ENCODE measurements at regions of chr7 and their contacts with region 1.

Region 1: GRCh38 chr7:93245525-93246432 is 13.6 kb downstream of the VPS50 start:
- DNase-seq: no peak
- ATAC-seq: no peak
- H3K4me3 ChIP-seq: no peak overlapping the region
- H3K27ac ChIP-seq: no peak overlapping the region
- H3K4me1 ChIP-seq: peaks cover 0 to 9% (median 0%) of the 10 kb centered on the region in 12 donors
- H3K27me3 ChIP-seq: no peaks in the 10 kb centered on the region
- CTCF ChIP-seq: peak; percentile 50 to 75 (median 64)
- POLR2A ChIP-seq: no peak

Region 2: DNA sequence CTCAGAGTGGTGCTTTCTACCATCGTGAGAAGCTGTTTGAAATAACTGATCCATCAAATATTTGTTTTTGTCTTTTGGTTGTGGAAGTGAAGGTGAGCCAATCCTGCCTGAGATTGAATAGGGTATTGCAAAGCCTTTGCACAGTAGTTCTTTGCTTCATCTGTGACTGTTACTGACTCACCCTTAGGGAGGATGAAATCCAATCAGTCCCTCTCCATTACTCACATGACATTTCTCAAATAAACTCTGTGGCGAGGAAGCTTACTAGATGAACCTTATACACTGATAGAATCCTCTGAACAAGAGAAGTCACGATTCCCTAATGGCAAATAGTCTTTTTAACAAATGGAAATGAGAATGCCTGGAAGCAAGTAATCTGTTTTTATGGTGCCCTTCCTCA is 51.4 kb before region 1 on chr7:
- intact Hi-C with region 1: no loop called
- DNase-seq: no peak
- ATAC-seq: no peak
- H3K4me3 ChIP-seq: no peak overlapping the region
- H3K27ac ChIP-seq: no peak overlapping the region
- H3K4me1 ChIP-seq: no peaks in the 10 kb centered on the region
- H3K27me3 ChIP-seq: peaks cover 0 to 8% (median 0%) of the 10 kb centered on the region in 9 donors
- CTCF ChIP-seq: no peak
- POLR2A ChIP-seq: no peak

Region 3: DNA sequence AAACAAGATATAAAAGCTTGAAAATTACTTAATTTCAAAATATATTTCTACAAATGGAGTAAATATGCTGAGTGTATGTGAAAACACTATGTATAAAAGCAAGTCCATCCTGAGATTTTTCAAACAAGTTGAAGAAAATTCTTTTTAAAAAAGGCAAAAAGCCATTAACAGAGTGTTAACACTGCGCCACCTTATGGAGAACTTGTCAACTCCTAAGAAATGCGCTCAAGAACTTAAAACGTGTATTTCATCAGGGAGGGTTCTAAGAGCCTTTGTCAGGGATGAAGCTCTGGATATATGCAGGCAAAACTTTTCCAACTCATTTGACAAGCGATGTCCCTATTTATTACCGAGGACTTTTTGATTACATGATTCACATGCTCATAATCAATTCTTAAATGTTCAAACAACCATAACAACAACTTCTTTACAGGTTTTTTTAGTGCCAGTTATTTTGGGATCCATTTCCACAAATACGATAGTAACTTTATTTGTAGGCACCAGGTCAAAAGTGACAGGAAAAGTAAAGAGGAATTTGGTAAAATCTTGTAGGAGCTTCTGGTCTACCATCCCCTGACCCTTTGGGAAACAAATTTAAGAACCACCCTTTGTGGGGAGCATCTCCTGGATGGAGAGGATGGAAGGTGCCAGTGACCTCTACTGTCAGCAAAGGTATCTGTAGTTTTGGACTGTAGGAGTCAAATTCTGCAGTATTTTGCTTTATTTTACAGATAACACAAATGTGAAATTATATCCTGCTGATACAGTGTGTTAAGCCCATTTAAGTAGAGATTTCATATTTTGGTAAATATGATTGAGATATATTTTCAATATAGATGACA is 305.5 kb after region 1 on chr7:
- intact Hi-C with region 1: loop called in 1 of 10 experiments (anchors 10 kb)
- DNase-seq: no peak
- ATAC-seq: no peak
- H3K4me3 ChIP-seq: no peak overlapping the region
- H3K27ac ChIP-seq: no peak overlapping the region
- H3K4me1 ChIP-seq: no peaks in the 10 kb centered on the region
- H3K27me3 ChIP-seq: peaks cover 0 to 4% (median 0%) of the 10 kb centered on the region in 9 donors
- CTCF ChIP-seq: peak in 7 of 12 donors; percentile 23 to 51 (median 37)
- POLR2A ChIP-seq: no peak

Region 4: GRCh38 chr7:94289071-94289470 is 1043.3 kb after region 1 on chr7:
- intact Hi-C with region 1: no loop called
- DNase-seq: peak in 4 of 5 donors; percentile 52 to 61 (median 55)
- ATAC-seq: peak in 3 of 4 donors; percentile 82 to 85 (median 83)
- H3K4me3 ChIP-seq: no peak overlapping the region
- H3K27ac ChIP-seq: no peak overlapping the region
- H3K4me1 ChIP-seq: no peaks in the 10 kb centered on the region
- H3K27me3 ChIP-seq: no peaks in the 10 kb centered on the region
- CTCF ChIP-seq: peak; percentile 58 to 90 (median 81)
- POLR2A ChIP-seq: no peak

Measured in heart left ventricle (tissue), 16 donors.